ENCODE measurements at regions of chr1 and their contacts with region 1.

Region 1: GRCh38 chr1:218480137-218480536 is 135.0 kb downstream of the TGFB2 start:
- DNase-seq: peak; percentile 93
- H3K4me3 ChIP-seq: no peak overlapping the region
- H3K27ac ChIP-seq: peak overlapping the region; percentile 100
- H3K4me1 ChIP-seq: peaks cover 33% of the 10 kb centered on the region
- H3K27me3 ChIP-seq: no peaks in the 10 kb centered on the region
- CTCF ChIP-seq: no peak
- POLR2A ChIP-seq: no peak

Region 2: GRCh38 chr1:218345673-218346390 is 134.3 kb before region 1 on chr1:
- CTCF ChIA-PET with region 1: no interaction called
- POLR2A ChIA-PET with region 1: no interaction called
- dilution Hi-C with region 1: no loop called
- intact Hi-C with region 1: loop called (anchors 1 kb)
- DNase-seq: peak; percentile 74
- H3K4me3 ChIP-seq: peak overlapping the region; percentile 86 to 95 (median 88)
- H3K27ac ChIP-seq: peak overlapping the region; percentile 85
- H3K4me1 ChIP-seq: peaks cover 32% of the 10 kb centered on the region
- H3K27me3 ChIP-seq: no peaks in the 10 kb centered on the region
- CTCF ChIP-seq: no peak
- POLR2A ChIP-seq: peak; percentile 75

Region 3: DNA sequence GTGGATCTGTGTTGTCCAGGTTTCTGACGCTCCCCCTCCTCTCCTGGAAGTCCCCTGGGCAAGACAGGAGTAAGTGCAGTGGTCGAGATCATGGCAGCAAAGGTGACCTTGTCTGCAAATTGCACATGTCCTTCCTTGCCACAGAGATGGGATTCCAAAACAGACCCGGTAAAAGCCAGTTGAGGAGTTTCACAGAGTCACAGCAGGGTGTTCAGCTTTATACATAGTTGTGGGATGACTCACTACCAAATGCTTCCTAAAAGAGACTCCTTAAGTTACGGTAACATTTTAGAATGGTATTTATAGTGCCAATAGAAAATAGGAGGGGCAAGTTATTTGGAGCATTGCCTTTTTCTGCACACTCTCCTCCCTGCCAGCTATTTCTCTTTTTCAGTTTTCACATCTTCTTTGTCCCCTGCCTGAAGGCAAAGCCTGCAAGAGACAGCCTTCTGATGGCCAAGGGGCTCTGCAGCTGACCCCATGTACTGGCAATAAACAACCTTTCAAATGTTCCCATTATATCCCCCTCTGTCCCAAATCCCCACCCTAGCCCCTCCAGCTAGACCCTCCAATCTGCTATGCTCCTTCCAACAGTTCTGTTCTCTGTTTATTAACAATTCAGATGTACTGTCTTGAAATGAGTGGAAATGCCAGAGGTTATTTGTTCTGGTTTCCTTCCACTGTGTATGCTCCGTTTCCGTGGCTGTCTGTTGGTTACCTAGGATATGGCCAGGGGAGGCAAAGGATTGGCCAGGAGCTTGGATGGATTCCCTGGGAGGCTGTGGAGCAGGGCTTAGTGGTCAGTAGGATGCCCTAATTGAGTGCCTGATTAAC is 20.0 kb before region 1 on chr1:
- CTCF ChIA-PET with region 1: interaction called, 4 read pairs
- POLR2A ChIA-PET with region 1: interaction called, 4 read pairs
- dilution Hi-C with region 1: no loop called
- intact Hi-C with region 1: loop called (anchors 1 kb)
- DNase-seq: peak; percentile 82
- H3K4me3 ChIP-seq: peak overlapping the region in 1 of 3 experiments; percentile 44
- H3K27ac ChIP-seq: peak overlapping the region; percentile 98
- H3K4me1 ChIP-seq: peaks cover 44% of the 10 kb centered on the region
- H3K27me3 ChIP-seq: no peaks in the 10 kb centered on the region
- CTCF ChIP-seq: no peak
- POLR2A ChIP-seq: no peak

Region 4: GRCh38 chr1:218557731-218558130 is 77.6 kb after region 1 on chr1:
- CTCF ChIA-PET with region 1: interaction called, 5 read pairs
- POLR2A ChIA-PET with region 1: no interaction called
- dilution Hi-C with region 1: no loop called
- intact Hi-C with region 1: loop called (anchors 1 kb)
- DNase-seq: peak; percentile 96
- H3K4me3 ChIP-seq: no peak overlapping the region
- H3K27ac ChIP-seq: peak overlapping the region; percentile 65
- H3K4me1 ChIP-seq: peaks cover 13% of the 10 kb centered on the region
- H3K27me3 ChIP-seq: no peaks in the 10 kb centered on the region
- CTCF ChIP-seq: no peak
- POLR2A ChIP-seq: no peak

Region 5: DNA sequence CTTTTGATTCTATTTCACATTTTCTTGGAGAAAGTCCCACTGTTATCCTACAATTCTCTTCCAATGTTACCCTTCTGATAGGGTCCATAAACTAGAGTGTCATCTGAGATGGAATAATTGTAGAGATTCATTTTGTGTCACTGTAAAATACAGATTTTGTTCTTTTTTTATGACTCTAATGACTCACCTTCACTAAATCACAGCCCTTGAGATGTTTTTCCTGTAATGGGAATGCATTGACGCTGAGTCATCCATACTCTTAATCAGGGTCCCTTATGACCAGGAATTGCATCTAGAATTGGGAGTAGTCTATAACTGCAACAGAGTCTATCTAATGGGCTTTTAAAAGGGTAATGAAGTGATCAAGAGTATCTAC is 180.5 kb after region 1 on chr1:
- CTCF ChIA-PET with region 1: no interaction called
- POLR2A ChIA-PET with region 1: no interaction called
- dilution Hi-C with region 1: no loop called
- intact Hi-C with region 1: loop called (anchors 5 kb)
- DNase-seq: peak; percentile 91
- H3K4me3 ChIP-seq: no peak overlapping the region
- H3K27ac ChIP-seq: peak overlapping the region; percentile 64
- H3K4me1 ChIP-seq: peaks cover 26% of the 10 kb centered on the region
- H3K27me3 ChIP-seq: no peaks in the 10 kb centered on the region
- CTCF ChIP-seq: no peak
- POLR2A ChIP-seq: no peak

Region 6: DNA sequence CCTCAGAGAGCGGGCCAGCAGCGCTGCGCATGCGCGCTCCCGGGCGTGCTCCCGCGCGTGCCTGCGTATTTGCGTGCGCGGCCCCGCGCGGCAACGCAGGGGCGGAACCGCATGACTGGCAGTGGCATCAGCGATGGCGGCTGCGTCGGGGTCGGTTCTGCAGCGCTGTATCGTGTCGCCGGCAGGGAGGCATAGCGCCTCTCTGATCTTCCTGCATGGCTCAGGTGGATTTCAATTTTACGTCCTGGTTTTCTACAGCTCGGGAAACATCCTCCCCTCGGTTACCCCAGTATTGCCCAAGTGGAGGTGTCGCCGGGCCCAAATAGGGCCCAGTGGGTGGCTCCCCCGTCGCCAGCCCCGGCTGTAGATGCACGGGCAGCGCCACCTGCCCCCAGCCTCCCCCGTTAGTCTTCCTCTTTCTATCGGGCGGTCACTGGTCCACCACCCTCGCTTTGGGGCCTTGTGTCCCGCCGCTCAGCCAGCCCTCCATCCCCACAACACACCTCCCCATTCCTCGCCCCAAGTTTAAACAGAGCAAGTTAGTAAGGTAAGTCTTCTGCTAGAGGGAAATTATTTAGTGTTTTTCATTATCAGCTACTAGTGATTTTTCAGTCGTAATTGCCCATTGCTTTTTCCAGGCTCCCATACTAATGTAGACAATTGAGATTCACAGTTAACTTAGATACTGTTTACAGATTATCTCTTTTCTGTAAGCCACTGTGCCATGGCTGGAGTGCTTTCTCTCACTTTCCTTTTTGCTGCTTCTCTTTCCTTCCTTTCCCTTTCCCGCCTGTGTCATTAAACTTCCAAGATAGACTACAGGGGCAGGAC is 693.8 kb after region 1 on chr1 and contains the start of gene LYPLAL1:
- CTCF ChIA-PET with region 1: no interaction called
- POLR2A ChIA-PET with region 1: no interaction called
- dilution Hi-C with region 1: no loop called
- intact Hi-C with region 1: loop called (anchors 5 kb)
- DNase-seq: peak; percentile 92
- H3K4me3 ChIP-seq: peak within 1 kb of the TSS; percentile 78 to 90 (median 86)
- H3K27ac ChIP-seq: peak within 1 kb of the TSS; percentile 80
- H3K4me1 ChIP-seq: peaks cover 15% of the 10 kb centered on the region
- H3K27me3 ChIP-seq: no peaks in the 10 kb centered on the region
- CTCF ChIP-seq: peak in 1 of 2 donors; percentile 7
- POLR2A ChIP-seq: peak; percentile 97
- total RNA-seq, gene LYPLAL1: 19.1 and 25.4 TPM in 2 replicates

Region 7: GRCh38 chr1:219324629-219325367 is 844.7 kb after region 1 on chr1:
- CTCF ChIA-PET with region 1: no interaction called
- POLR2A ChIA-PET with region 1: no interaction called
- dilution Hi-C with region 1: no loop called
- intact Hi-C with region 1: loop called (anchors 5 kb)
- DNase-seq: peak; percentile 83
- H3K4me3 ChIP-seq: no peak overlapping the region
- H3K27ac ChIP-seq: peak overlapping the region; percentile 78
- H3K4me1 ChIP-seq: peaks cover 44% of the 10 kb centered on the region
- H3K27me3 ChIP-seq: no peaks in the 10 kb centered on the region
- CTCF ChIP-seq: no peak
- POLR2A ChIP-seq: peak; percentile 63

Measured in endothelial cell of umbilical vein (primary cell).